B cell (primary cell): ENCODE measurements at regions of chr1 and their contacts with region 1.

Region 1: GRCh38 chr1:172351761-172352161 is 68.7 kb upstream of the C1orf105 start:
- DNase-seq: no peak
- ATAC-seq: no peak
- H3K4me3 ChIP-seq: no peak overlapping the region
- H3K4me3 Mint-ChIP-seq: no peak overlapping the region
- H3K27ac ChIP-seq: no peak overlapping the region
- H3K27ac Mint-ChIP-seq: no peak overlapping the region
- H3K4me1 ChIP-seq: peaks cover 0 to 15% of the 10 kb centered on the region in 2 donors
- H3K4me1 Mint-ChIP-seq: peaks cover 31% of the 10 kb centered on the region
- H3K27me3 ChIP-seq: no peaks in the 10 kb centered on the region
- H3K27me3 Mint-ChIP-seq: no peaks in the 10 kb centered on the region
- CTCF ChIP-seq: no peak

Region 2: GRCh38 chr1:172308577-172308976 is 43.2 kb before region 1 on chr1:
- CTCF ChIA-PET with region 1: no interaction called
- POLR2A ChIA-PET with region 1: no interaction called
- intact Hi-C with region 1: loop called (anchors 5 kb)
- DNase-seq: no peak
- ATAC-seq: no peak
- H3K4me3 ChIP-seq: no peak overlapping the region
- H3K4me3 Mint-ChIP-seq: no peak overlapping the region
- H3K27ac ChIP-seq: no peak overlapping the region
- H3K27ac Mint-ChIP-seq: no peak overlapping the region
- H3K4me1 ChIP-seq: no peaks in the 10 kb centered on the region
- H3K4me1 Mint-ChIP-seq: peaks cover 3% of the 10 kb centered on the region
- H3K27me3 ChIP-seq: no peaks in the 10 kb centered on the region
- H3K27me3 Mint-ChIP-seq: no peaks in the 10 kb centered on the region
- CTCF ChIP-seq: no peak